Aorta (tissue), 5 donors: ENCODE measurements at regions of chr15 and their contacts with region 1.

Region 1: GRCh38 chr15:59247364-59247763 is 40.7 kb downstream of the LDHAL6B start:
- DNase-seq: peak in 1 of 2 donors; percentile 64
- ATAC-seq: no peak
- H3K4me3 ChIP-seq: no peak overlapping the region
- H3K27ac ChIP-seq: no peak overlapping the region
- H3K4me1 ChIP-seq: no peaks in the 10 kb centered on the region
- H3K27me3 ChIP-seq: no peaks in the 10 kb centered on the region

Region 2: DNA sequence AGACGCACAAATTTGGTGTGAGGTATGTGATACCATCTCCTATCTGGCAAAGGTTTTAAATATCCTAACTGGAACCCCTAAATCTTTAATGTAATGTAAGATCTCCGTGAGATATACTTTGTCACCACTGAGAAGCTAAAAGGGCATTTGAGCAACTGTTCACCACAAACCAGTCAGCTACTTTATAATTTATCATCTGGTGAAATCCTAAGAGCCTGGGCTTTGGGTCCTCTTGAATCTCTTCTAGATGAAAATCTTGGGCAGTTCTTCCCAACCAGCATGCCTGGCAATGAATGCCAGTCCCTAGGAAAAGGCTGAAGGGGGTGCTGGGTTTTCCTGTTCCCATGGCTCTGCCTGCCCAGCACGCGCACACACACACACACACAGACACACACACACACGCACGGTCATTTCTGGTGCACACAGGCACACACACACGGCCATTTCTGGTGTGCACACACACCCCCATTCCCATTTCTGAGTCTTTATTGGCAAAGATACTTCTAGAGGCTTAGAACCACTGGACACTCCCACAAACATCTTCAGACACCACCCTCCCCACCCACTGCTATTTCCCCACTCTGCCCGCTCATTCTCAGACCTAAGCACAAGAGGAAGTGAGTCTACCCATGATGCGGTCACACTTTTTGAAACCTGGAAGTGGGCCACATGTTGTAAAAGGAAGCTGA is 52.7 kb after region 1 on chr15:
- intact Hi-C with region 1: loop called in 1 of 2 experiments (anchors 5 kb)
- DNase-seq: peak; percentile 80 to 88
- ATAC-seq: peak; percentile 84
- H3K4me3 ChIP-seq: no peak overlapping the region
- H3K27ac ChIP-seq: peak overlapping the region in 1 of 2 donors; percentile 28
- H3K4me1 ChIP-seq: peaks cover 0 to 3% of the 10 kb centered on the region in 2 donors
- H3K27me3 ChIP-seq: no peaks in the 10 kb centered on the region